ENCODE measurements at regions of chr12 and their contacts with region 1.

Region 1: DNA sequence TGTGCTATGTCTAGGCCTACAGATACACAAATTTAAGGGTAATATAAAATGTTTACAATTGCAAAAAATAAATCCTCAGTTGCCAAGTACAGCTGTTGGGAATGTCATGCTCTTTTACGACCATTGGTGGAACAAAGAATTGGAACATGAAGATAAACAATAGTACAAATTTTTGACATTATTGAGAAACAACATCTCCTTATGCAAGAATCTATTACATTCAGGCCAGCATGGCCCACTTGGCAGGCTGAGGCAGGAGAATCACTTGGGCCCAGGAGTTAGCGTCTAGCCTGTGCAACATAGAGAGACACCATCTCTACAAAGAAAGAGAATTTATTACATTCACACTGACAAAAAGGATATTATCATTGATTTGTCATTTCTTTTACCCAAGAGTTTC is 135.9 kb upstream of the NTF3 start:
- DNase-seq: no peak
- H3K4me3 ChIP-seq: no peak overlapping the region
- H3K27ac ChIP-seq: no peak overlapping the region
- H3K27me3 ChIP-seq: peaks cover 0 to 32% (median 6%) of the 10 kb centered on the region in 45 donors
- CTCF ChIP-seq: no peak

Region 2: GRCh38 chr12:5309654-5310053 is 13.7 kb after region 1 on chr12:
- intact Hi-C with region 1: loop called in 1 of 2 experiments (anchors 1 kb)
- DNase-seq: no peak
- H3K4me3 ChIP-seq: no peak overlapping the region
- H3K27ac ChIP-seq: no peak overlapping the region
- H3K27me3 ChIP-seq: peaks cover 0 to 6% (median 0%) of the 10 kb centered on the region in 45 donors
- CTCF ChIP-seq: no peak

Measured in dorsolateral prefrontal cortex (tissue), 120 donors.